GM23248 (cell line): ENCODE measurements at regions of chr4 and their contacts with region 1.

Region 1: DNA sequence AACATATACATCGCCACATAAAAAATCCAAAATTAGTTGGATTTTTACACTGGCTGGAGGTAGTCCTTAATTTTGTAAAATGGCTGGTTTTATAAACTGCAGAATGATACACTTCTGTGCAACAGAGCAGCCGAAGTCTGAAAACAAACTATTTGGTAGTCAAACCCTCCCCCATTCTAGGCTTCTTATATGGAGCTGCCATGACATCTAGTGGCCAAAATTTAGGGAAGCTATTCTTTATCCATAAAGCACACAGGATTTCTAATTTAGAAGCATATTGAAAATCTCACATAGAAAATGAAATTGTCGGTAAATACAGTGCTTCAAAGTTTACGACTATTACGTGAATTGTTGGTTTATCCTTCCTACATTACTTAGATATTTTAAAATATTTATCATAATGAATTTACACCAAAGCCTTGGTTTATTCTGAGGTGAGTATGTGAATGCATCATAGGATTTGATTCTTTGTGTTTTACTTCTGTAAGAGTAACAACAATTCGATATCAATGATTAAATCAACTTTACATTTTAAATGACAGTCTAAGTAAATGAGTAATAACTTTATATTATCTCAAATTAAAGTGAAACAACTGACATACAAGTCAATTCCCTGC is 113.4 kb upstream of the FAM241A start:
- DNase-seq: peak; percentile 86
- H3K4me3 ChIP-seq: no peak overlapping the region
- H3K27ac ChIP-seq: no peak overlapping the region
- H3K4me1 ChIP-seq: peaks cover 12% of the 10 kb centered on the region
- H3K27me3 ChIP-seq: no peaks in the 10 kb centered on the region

Region 2: GRCh38 chr4:111602848-111603247 is 429.0 kb before region 1 on chr4:
- in situ Hi-C with region 1: no loop called
- DNase-seq: peak; percentile 45
- H3K4me3 ChIP-seq: no peak overlapping the region
- H3K27ac ChIP-seq: no peak overlapping the region
- H3K4me1 ChIP-seq: peaks cover 20% of the 10 kb centered on the region
- H3K27me3 ChIP-seq: no peaks in the 10 kb centered on the region

Region 3: GRCh38 chr4:111652236-111652635 is 379.6 kb before region 1 on chr4:
- in situ Hi-C with region 1: loop called (anchors 10 kb)
- DNase-seq: peak; percentile 64
- H3K4me3 ChIP-seq: no peak overlapping the region
- H3K27ac ChIP-seq: no peak overlapping the region
- H3K4me1 ChIP-seq: peaks cover 11% of the 10 kb centered on the region
- H3K27me3 ChIP-seq: no peaks in the 10 kb centered on the region

Region 4: DNA sequence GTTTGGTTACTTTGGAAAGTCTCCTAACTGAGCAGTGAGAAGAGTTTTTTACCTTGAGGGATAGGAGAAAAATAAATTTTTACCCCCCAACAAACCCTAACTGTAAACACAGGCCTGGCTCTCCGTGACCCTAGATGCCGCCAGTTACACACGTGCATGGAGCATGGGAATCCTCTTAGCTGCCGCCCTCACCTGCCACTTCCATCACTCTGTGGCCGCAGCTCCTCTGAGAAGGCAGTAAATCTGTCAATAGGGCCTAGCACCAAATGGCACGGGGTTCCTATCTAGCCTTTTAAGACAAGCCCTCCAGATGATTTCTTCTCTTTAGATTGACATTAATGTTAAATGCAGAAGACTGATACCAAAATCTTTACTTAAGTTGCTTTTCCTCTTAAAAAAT is 216.9 kb before region 1 on chr4:
- in situ Hi-C with region 1: no loop called
- DNase-seq: no peak
- H3K4me3 ChIP-seq: no peak overlapping the region
- H3K27ac ChIP-seq: no peak overlapping the region
- H3K4me1 ChIP-seq: no peaks in the 10 kb centered on the region
- H3K27me3 ChIP-seq: no peaks in the 10 kb centered on the region

Region 5: DNA sequence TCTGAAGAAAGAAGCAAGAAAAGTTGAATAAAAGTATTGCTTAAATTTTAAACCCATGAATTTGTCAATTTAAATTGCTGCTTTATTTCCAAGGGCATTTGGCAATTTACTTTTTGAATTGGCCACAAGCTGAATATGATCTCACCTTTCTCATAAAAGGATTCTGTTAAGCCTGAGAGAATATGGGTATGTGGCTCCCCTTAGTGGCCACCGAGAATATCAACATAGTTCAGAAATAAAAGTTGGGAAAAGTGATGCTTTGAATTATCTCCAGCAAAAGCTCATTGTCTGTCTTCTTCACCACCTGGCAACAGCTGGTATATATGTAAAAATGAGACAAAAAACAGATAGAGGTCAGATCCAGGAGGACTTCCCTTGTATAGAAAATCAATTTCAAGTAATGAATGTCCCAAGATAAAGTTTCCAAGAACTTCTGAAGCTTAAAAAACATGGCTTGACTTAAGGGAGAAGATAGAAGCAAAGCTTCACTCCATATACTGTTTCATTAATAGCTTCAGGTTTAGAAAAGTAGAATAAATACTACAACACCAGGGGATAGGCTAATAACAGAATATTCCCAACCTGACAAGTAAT is 177.2 kb before region 1 on chr4:
- in situ Hi-C with region 1: loop called (anchors 10 kb)
- DNase-seq: peak; percentile 74
- H3K4me3 ChIP-seq: no peak overlapping the region
- H3K27ac ChIP-seq: no peak overlapping the region
- H3K4me1 ChIP-seq: no peaks in the 10 kb centered on the region; the same call in 1 of the 2 replicates
- H3K27me3 ChIP-seq: no peaks in the 10 kb centered on the region

Region 6: GRCh38 chr4:111943795-111944203 is 88.0 kb before region 1 on chr4:
- in situ Hi-C with region 1: loop called (anchors 10 kb)
- DNase-seq: peak; percentile 73
- H3K4me3 ChIP-seq: no peak overlapping the region
- H3K27ac ChIP-seq: no peak overlapping the region
- H3K4me1 ChIP-seq: no peaks in the 10 kb centered on the region
- H3K27me3 ChIP-seq: no peaks in the 10 kb centered on the region